Naive thymus-derived CD4-positive, alpha-beta T cell (primary cell): ENCODE measurements at regions of chr4 and their contacts with region 1.

Region 1: DNA sequence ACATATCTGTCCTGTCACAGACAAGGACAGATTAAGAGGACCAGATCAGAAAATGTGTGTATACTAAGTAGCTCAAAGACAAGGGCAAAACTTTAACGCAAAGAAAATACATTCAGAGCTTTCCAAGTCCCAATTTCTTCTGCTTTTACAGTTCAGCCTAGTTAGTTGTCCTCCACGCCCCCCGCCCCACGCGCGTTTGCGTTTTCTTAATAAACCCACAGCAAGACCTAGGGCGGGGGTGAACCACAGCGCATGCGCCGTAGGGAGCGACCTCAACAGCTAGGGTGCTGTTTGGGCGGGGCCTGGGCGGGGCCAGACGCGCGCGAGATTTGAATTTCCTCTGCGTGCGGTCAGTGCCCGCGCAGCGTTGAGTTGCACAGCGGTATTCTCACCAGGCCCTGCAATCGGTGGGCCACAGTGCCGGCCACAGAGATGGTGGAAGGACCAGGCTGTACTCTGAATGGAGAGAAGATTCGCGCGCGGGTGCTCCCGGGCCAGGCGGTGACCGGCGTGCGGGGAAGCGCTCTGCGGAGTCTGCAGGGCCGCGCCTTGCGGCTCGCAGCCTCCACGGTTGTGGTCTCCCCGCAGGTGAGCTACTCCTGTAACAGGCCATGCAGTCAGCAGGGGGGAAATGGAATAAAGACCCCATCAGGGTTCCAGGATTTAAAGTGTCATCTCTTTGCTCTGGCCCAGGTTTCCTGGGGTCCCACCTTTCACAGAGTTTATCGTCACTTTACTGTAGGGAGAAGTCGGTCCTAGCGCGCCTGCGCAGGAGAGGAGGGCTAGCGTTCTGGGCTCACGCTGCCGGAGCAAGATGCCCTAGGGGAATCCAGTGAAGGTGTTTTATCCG is at the start of gene NEIL3:
- DNase-seq: peak; percentile 85 to 92 (median 90)
- ATAC-seq: peak; percentile 94
- H3K4me3 ChIP-seq: peak within 1 kb of the TSS; percentile 78
- H3K4me3 Mint-ChIP-seq: peak within 1 kb of the TSS; percentile 81 to 95 (median 89)
- H3K27ac ChIP-seq: peak within 1 kb of the TSS; percentile 69
- H3K27ac Mint-ChIP-seq: peak within 1 kb of the TSS; percentile 25 to 93 (median 82)
- H3K4me1 ChIP-seq: peaks cover 0 to 13% of the 10 kb centered on the region in 2 donors
- H3K4me1 Mint-ChIP-seq: peaks cover 4 to 56% (median 20%) of the 10 kb centered on the region in 7 donors
- H3K27me3 ChIP-seq: no peaks in the 10 kb centered on the region
- H3K27me3 Mint-ChIP-seq: no peaks in the 10 kb centered on the region
- total RNA-seq, gene NEIL3: 0.37 to 24.7 (median 2.4) TPM in 3 of 5 experiments, not detected in the others

Region 2: DNA sequence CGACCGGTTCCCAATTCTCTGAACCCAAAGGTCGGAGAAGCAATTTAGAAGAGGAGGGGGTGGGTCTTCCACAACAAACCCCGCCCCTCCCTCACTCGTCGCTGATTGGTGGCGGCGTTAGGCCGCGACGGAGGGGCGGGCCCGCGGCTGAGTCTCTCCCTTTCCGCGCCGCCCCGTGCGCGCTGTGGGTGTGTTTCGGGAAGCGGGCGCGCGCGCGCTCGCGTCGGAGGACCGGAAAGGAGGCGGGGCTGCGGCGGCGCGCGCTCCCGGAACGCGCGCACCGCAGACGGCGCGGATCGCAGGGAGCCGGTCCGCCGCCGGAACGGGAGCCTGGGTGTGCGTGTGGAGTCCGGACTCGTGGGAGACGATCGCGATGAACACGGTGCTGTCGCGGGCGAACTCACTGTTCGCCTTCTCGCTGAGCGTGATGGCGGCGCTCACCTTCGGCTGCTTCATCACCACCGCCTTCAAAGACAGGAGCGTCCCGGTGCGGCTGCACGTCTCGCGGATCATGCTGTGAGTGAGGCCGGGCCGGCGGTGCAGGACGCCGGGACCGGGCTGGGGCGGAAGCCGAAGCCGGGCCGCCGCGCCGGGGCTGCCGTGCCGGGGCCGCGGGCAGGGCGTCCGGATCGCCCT is 989.9 kb before region 1 on chr4 and contains the start of gene SPCS3:
- CTCF ChIA-PET with region 1: no interaction called
- POLR2A ChIA-PET with region 1: no interaction called
- intact Hi-C with region 1: loop called (anchors 1 kb)
- DNase-seq: peak; percentile 92 to 95 (median 95)
- ATAC-seq: peak; percentile 95
- H3K4me3 ChIP-seq: peak within 1 kb of the TSS; percentile 85
- H3K4me3 Mint-ChIP-seq: peak within 1 kb of the TSS; percentile 83 to 97 (median 92)
- H3K27ac ChIP-seq: peak within 1 kb of the TSS; percentile 91
- H3K27ac Mint-ChIP-seq: peak within 1 kb of the TSS; percentile 91 to 97 (median 92)
- H3K4me1 ChIP-seq: peaks cover 32 to 35% of the 10 kb centered on the region in 2 donors
- H3K4me1 Mint-ChIP-seq: peaks cover 32 to 62% (median 47%) of the 10 kb centered on the region in 7 donors
- H3K27me3 ChIP-seq: no peaks in the 10 kb centered on the region
- H3K27me3 Mint-ChIP-seq: peaks cover 0 to 4% (median 0%) of the 10 kb centered on the region in 5 donors
- total RNA-seq, gene SPCS3: 117 to 215 (median 153) TPM

Region 3: GRCh38 chr4:176800891-176801534 is 508.7 kb before region 1 on chr4:
- CTCF ChIA-PET with region 1: no interaction called
- POLR2A ChIA-PET with region 1: no interaction called
- intact Hi-C with region 1: no loop called
- DNase-seq: no peak
- ATAC-seq: no peak
- H3K4me3 ChIP-seq: no peak overlapping the region
- H3K4me3 Mint-ChIP-seq: no peak overlapping the region
- H3K27ac ChIP-seq: no peak overlapping the region
- H3K27ac Mint-ChIP-seq: no peak overlapping the region
- H3K4me1 ChIP-seq: no peaks in the 10 kb centered on the region
- H3K4me1 Mint-ChIP-seq: no peaks in the 10 kb centered on the region
- H3K27me3 ChIP-seq: no peaks in the 10 kb centered on the region
- H3K27me3 Mint-ChIP-seq: peaks cover 0 to 6% (median 5%) of the 10 kb centered on the region in 5 donors

Region 4: GRCh38 chr4:177250056-177250696 is 59.6 kb before region 1 on chr4:
- CTCF ChIA-PET with region 1: interaction called, 3 read pairs
- POLR2A ChIA-PET with region 1: no interaction called
- intact Hi-C with region 1: loop called in 1 of 2 experiments (anchors 2 kb)
- DNase-seq: peak; percentile 12 to 70 (median 53)
- ATAC-seq: peak; percentile 94
- H3K4me3 ChIP-seq: no peak overlapping the region
- H3K4me3 Mint-ChIP-seq: peak overlapping the region in 4 of 10 donors; percentile 18 to 64 (median 30)
- H3K27ac ChIP-seq: no peak overlapping the region
- H3K27ac Mint-ChIP-seq: peak overlapping the region in 2 of 9 donors; percentile 60 to 71
- H3K4me1 ChIP-seq: no peaks in the 10 kb centered on the region
- H3K4me1 Mint-ChIP-seq: peaks cover 7 to 15% (median 12%) of the 10 kb centered on the region in 7 donors
- H3K27me3 ChIP-seq: no peaks in the 10 kb centered on the region
- H3K27me3 Mint-ChIP-seq: peaks cover 11 to 20% (median 14%) of the 10 kb centered on the region in 5 donors

Region 5: GRCh38 chr4:177339477-177340374 is 30.0 kb after region 1 on chr4:
- CTCF ChIA-PET with region 1: interaction called, 3 read pairs
- POLR2A ChIA-PET with region 1: no interaction called
- intact Hi-C with region 1: loop called (anchors 1 to 2 kb)
- DNase-seq: peak in 6 of 9 donors; percentile 5 to 46 (median 32)
- ATAC-seq: peak; percentile 92
- H3K4me3 ChIP-seq: no peak overlapping the region
- H3K4me3 Mint-ChIP-seq: peak overlapping the region in 1 of 10 donors; percentile 56
- H3K27ac ChIP-seq: no peak overlapping the region
- H3K27ac Mint-ChIP-seq: peak overlapping the region in 1 of 9 donors; percentile 64
- H3K4me1 ChIP-seq: no peaks in the 10 kb centered on the region
- H3K4me1 Mint-ChIP-seq: peaks cover 0 to 22% (median 0%) of the 10 kb centered on the region in 7 donors
- H3K27me3 ChIP-seq: no peaks in the 10 kb centered on the region
- H3K27me3 Mint-ChIP-seq: no peaks in the 10 kb centered on the region

Region 6: DNA sequence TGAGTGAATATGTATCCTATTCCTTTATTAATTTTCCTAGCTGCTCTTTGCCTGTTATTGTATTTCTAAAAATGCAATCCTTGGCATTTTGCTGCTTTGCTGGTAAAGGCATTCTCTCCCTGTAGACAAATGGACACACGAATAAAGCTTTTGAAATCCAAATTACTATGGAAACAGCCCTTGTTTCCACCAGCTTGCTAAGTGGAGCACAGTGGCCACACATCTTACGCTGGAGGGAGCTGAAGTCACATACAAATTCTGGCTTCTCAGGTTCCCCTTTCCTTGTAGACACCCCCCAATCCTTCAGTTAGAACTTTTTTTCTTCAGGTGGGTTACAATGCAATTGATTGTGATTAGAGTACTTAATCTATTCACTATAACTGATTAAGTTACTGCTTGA is 66.3 kb after region 1 on chr4:
- CTCF ChIA-PET with region 1: no interaction called
- POLR2A ChIA-PET with region 1: no interaction called
- intact Hi-C with region 1: no loop called
- DNase-seq: no peak
- ATAC-seq: no peak
- H3K4me3 ChIP-seq: no peak overlapping the region
- H3K4me3 Mint-ChIP-seq: no peak overlapping the region
- H3K27ac ChIP-seq: no peak overlapping the region
- H3K27ac Mint-ChIP-seq: no peak overlapping the region
- H3K4me1 ChIP-seq: no peaks in the 10 kb centered on the region
- H3K4me1 Mint-ChIP-seq: no peaks in the 10 kb centered on the region
- H3K27me3 ChIP-seq: no peaks in the 10 kb centered on the region
- H3K27me3 Mint-ChIP-seq: peaks cover 0 to 24% (median 0%) of the 10 kb centered on the region in 5 donors

Region 7: GRCh38 chr4:177558995-177559394 is 249.2 kb after region 1 on chr4:
- CTCF ChIA-PET with region 1: no interaction called
- POLR2A ChIA-PET with region 1: no interaction called
- intact Hi-C with region 1: no loop called
- DNase-seq: no peak
- ATAC-seq: no peak
- H3K4me3 ChIP-seq: no peak overlapping the region
- H3K4me3 Mint-ChIP-seq: no peak overlapping the region
- H3K27ac ChIP-seq: no peak overlapping the region
- H3K27ac Mint-ChIP-seq: no peak overlapping the region
- H3K4me1 ChIP-seq: no peaks in the 10 kb centered on the region
- H3K4me1 Mint-ChIP-seq: no peaks in the 10 kb centered on the region
- H3K27me3 ChIP-seq: no peaks in the 10 kb centered on the region
- H3K27me3 Mint-ChIP-seq: no peaks in the 10 kb centered on the region